HepG2 (cell line): ENCODE measurements at regions of chrX and their contacts with region 1.

Region 1: GRCh38 chrX:46165866-46166265 is 379.4 kb downstream of the ZNF674 start:
- DNase-seq: no peak
- ATAC-seq: no peak
- H3K4me3 ChIP-seq: no peak overlapping the region
- H3K27ac ChIP-seq: no peak overlapping the region
- H3K4me1 ChIP-seq: 0 out of 2 replicates have a peak, but pooled peaks cover 2% of the 10 kb centered on the region
- H3K27me3 ChIP-seq: no peaks in the 10 kb centered on the region
- CTCF ChIP-seq: no peak
- EP300 ChIP-seq: no peak
- POLR2A ChIP-seq: no peak
- RAD21 ChIP-seq: no peak

Region 2: DNA sequence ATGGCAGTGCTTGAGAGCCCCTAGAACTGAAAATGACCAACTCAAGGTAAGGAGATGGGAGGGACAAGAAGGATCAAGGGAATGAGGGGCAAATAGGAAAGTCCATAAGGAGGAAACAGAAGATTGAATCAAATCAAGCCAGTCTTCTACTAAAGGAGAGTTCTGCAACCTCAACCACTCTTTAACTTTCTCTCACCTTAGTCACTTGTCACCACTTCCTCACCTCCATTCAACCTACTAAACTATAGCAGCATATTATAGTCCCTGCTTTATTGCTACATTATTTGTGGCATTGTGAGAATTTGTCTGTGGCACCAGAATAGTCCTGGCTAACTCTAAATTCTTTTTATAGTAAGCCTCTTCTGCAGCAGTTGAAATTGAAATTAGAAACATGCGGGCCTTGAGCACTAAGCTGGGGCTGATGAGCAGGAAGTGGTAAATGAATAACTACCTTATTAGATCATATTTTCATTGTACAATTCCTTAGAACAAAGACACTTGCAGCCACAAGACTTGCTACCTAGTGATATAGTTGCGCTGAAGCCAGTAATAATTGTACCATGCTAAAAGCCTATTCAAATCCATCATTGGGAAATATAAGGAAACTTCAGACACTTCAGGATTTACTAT is 42.5 kb after region 1 on chrX:
- CTCF ChIA-PET with region 1: no interaction called
- POLR2A ChIA-PET with region 1: no interaction called
- in situ Hi-C with region 1: no loop called
- intact Hi-C with region 1: loop called (anchors 2 kb)
- DNase-seq: no peak
- ATAC-seq: no peak
- H3K4me3 ChIP-seq: no peak overlapping the region
- H3K27ac ChIP-seq: no peak overlapping the region
- H3K4me1 ChIP-seq: no peaks in the 10 kb centered on the region
- H3K27me3 ChIP-seq: no peaks in the 10 kb centered on the region
- CTCF ChIP-seq: no peak
- EP300 ChIP-seq: no peak
- POLR2A ChIP-seq: no peak
- RAD21 ChIP-seq: no peak

Region 3: DNA sequence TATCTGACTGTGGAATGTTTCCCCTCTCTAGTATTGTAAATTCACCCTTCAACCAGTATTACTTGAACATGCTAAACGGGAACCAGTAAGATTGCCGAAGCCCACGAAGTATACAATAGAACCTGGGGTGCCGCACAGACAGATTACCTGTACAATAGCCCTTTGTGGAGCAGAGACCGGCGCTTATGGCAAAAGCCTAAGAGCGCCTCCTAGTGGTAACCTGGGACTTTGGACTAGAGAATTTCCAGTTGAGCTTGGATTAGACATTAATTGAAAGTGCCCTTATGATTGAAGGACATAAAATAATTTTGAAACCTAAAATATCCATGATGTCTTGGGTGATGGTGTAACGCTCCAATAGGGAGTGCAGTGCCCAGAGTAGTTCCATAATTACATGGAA is 1218.6 kb after region 1 on chrX:
- CTCF ChIA-PET with region 1: no interaction called
- POLR2A ChIA-PET with region 1: no interaction called
- in situ Hi-C with region 1: no loop called
- intact Hi-C with region 1: no loop called
- DNase-seq: peak; percentile 64
- ATAC-seq: peak; percentile 73
- H3K4me3 ChIP-seq: peak overlapping the region in 1 of 3 experiments; percentile 30; a peak in 2 of 6 replicates
- H3K27ac ChIP-seq: no peak overlapping the region
- H3K4me1 ChIP-seq: peaks cover 6% of the 10 kb centered on the region; the same call in 1 of the 2 replicates
- H3K27me3 ChIP-seq: no peaks in the 10 kb centered on the region
- CTCF ChIP-seq: peak; percentile 72
- EP300 ChIP-seq: no peak
- POLR2A ChIP-seq: no peak
- RAD21 ChIP-seq: no peak